ENCODE measurements at regions of chr9 and their contacts with region 1.

Region 1: GRCh38 chr9:15211160-15211814 is 95.7 kb downstream of the TTC39B start:
- DNase-seq: peak; percentile 80
- H3K4me3 ChIP-seq: no peak overlapping the region
- H3K27ac ChIP-seq: no peak overlapping the region
- H3K4me1 ChIP-seq: peaks cover 3% of the 10 kb centered on the region
- H3K27me3 ChIP-seq: no peaks in the 10 kb centered on the region
- CTCF ChIP-seq: peak; percentile 79 to 81
- POLR2A ChIP-seq: no peak

Region 2: GRCh38 chr9:15135164-15135792 is 76.0 kb before region 1 on chr9:
- CTCF ChIA-PET with region 1: interaction called, 10 read pairs
- POLR2A ChIA-PET with region 1: no interaction called
- dilution Hi-C with region 1: no loop called
- intact Hi-C with region 1: no loop called
- DNase-seq: peak; percentile 82
- H3K4me3 ChIP-seq: no peak overlapping the region
- H3K27ac ChIP-seq: no peak overlapping the region
- H3K4me1 ChIP-seq: no peaks in the 10 kb centered on the region
- H3K27me3 ChIP-seq: no peaks in the 10 kb centered on the region
- CTCF ChIP-seq: peak; percentile 79 to 91
- POLR2A ChIP-seq: no peak

Region 3: DNA sequence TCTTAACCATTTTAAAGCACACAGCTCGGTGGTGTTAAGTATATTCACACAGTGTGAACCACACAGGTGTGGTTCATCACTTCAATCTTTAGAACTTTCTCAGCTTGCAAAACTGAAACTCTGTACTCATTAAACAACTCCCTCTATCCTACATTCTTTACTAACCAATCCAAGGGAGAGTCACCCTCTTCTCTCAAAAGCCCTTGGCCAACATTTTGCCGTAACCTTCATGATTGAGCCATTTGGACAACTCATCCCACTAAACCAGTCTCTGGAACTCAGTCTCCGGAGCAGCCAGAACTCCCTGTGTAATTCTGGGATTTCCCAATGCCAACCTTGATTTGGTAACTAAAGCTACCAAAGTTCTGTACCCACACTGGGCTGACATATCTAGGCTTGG is 11.0 kb after region 1 on chr9:
- CTCF ChIA-PET with region 1: interaction called, 10 read pairs
- POLR2A ChIA-PET with region 1: no interaction called
- dilution Hi-C with region 1: no loop called
- intact Hi-C with region 1: no loop called
- DNase-seq: no peak
- H3K4me3 ChIP-seq: no peak overlapping the region
- H3K27ac ChIP-seq: no peak overlapping the region
- H3K4me1 ChIP-seq: no peaks in the 10 kb centered on the region
- H3K27me3 ChIP-seq: no peaks in the 10 kb centered on the region
- CTCF ChIP-seq: no peak
- POLR2A ChIP-seq: no peak

Region 4: DNA sequence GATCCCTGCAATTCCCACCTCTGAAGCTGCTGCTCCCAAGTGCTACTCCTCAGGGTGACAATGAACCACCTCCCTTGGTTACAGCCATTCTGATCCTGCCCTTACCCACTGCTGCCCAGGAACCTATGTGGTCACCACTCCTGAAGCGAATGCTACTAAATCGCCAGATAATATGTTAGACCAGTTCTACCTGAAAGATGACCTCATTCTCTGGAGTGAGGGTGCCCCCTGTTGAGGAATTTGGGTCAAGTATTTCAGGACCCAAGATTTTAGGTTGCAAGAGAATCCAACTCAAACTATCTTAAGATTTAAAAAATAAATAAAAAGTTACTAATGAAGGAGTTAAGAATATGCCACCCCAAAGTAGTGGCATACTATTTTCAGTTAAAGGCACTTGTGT is 205.6 kb after region 1 on chr9:
- CTCF ChIA-PET with region 1: interaction called, 6 read pairs
- POLR2A ChIA-PET with region 1: no interaction called
- dilution Hi-C with region 1: no loop called
- intact Hi-C with region 1: loop called (anchors 1 kb)
- DNase-seq: peak; percentile 43
- H3K4me3 ChIP-seq: no peak overlapping the region
- H3K27ac ChIP-seq: no peak overlapping the region
- H3K4me1 ChIP-seq: peaks cover under 1% of the 10 kb centered on the region
- H3K27me3 ChIP-seq: no peaks in the 10 kb centered on the region
- CTCF ChIP-seq: no peak
- POLR2A ChIP-seq: no peak

Region 5: GRCh38 chr9:15642369-15642962 is 431.2 kb after region 1 on chr9:
- CTCF ChIA-PET with region 1: interaction called, 6 read pairs
- POLR2A ChIA-PET with region 1: no interaction called
- dilution Hi-C with region 1: no loop called
- intact Hi-C with region 1: loop called (anchors 1 kb)
- DNase-seq: peak; percentile 59
- H3K4me3 ChIP-seq: no peak overlapping the region
- H3K27ac ChIP-seq: no peak overlapping the region
- H3K4me1 ChIP-seq: peaks cover 8% of the 10 kb centered on the region
- H3K27me3 ChIP-seq: no peaks in the 10 kb centered on the region
- CTCF ChIP-seq: peak; percentile 24 to 25
- POLR2A ChIP-seq: no peak